IMR-90 (cell line): ENCODE measurements at regions of chr14 and their contacts with region 1.

Region 1: DNA sequence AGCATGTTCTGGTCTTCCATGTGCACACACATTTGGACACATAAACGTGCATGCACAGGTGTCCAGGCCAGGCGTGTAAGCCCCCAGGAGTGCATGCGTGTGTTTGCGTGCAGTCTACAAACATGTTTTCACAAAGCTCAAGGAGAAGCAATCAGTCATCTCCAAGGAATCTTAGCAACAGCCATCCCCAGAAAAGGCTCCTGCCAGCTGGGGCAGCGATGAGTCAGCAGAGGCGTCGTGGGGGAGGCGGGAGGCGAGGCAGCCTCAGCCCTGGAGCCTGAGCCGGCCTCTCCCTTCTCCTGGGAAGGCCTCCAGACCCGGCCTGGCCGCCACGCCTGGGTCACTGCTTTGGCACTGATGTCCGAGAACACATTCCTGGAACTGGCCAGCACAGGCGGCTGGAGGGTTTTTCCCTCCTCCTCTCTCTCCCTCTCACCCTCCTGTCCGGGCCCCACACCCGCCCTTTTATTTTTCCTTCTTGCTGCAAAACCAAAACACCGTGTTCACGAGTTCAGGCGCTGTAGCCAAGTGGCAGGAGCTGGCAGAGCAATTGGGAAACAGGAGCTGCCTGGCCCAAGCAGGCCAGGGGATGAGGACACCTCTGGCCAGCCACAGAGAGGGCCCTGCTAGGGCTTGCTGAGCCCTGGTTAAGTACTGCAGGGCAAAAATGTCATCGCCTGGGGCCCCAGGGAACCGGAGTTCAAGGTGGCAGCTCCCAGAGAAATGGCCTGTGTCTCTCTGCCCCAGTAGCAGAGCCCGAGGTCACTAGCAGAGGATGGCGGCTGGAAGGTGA is 92.7 kb downstream of the LRRC74A start:
- DNase-seq: peak; percentile 99
- ATAC-seq: peak; percentile 82
- H3K4me3 ChIP-seq: no peak overlapping the region
- H3K27ac ChIP-seq: peak overlapping the region; percentile 97
- H3K4me1 ChIP-seq: peaks cover 48% of the 10 kb centered on the region
- H3K27me3 ChIP-seq: no peaks in the 10 kb centered on the region
- CTCF ChIP-seq: 0 out of 2 replicates have a peak, but pooled peaks have one; percentile 13
- POLR2A ChIP-seq: peak; percentile 63
- RAD21 ChIP-seq: peak; percentile 31

Region 2: DNA sequence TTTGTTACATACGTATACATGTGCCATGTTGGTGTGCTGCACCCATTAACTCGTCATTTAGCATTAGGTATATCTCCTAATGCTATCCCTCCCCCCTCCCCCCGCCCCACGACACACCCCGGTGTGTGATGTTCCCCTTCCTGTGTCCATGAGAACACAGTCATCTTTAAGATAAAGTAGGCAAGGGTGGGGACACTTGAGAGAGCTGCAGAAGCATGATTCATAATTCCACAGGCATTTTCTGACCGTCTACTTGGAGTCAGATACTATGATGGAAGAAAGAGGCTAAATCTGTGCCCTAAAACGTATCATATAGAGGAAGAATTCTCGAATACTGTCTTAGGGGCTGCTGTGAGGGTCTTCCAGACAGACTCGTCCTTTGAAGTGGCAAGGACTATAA is 303.6 kb before region 1 on chr14:
- CTCF ChIA-PET with region 1: no interaction called
- POLR2A ChIA-PET with region 1: no interaction called
- dilution Hi-C with region 1: no loop called
- in situ Hi-C with region 1: no loop called
- intact Hi-C with region 1: no loop called
- DNase-seq: no peak
- ATAC-seq: no peak
- H3K4me3 ChIP-seq: no peak overlapping the region
- H3K27ac ChIP-seq: no peak overlapping the region
- H3K4me1 ChIP-seq: no peaks in the 10 kb centered on the region
- H3K27me3 ChIP-seq: peaks cover 2% of the 10 kb centered on the region; the same call in 1 of the 2 replicates
- CTCF ChIP-seq: no peak
- POLR2A ChIP-seq: no peak
- RAD21 ChIP-seq: no peak

Region 3: GRCh38 chr14:76720382-76720813 is 198.5 kb before region 1 on chr14:
- CTCF ChIA-PET with region 1: no interaction called
- POLR2A ChIA-PET with region 1: no interaction called
- dilution Hi-C with region 1: no loop called
- in situ Hi-C with region 1: no loop called
- intact Hi-C with region 1: no loop called
- DNase-seq: peak; percentile 38
- ATAC-seq: peak; percentile 65
- H3K4me3 ChIP-seq: no peak overlapping the region
- H3K27ac ChIP-seq: no peak overlapping the region
- H3K4me1 ChIP-seq: no peaks in the 10 kb centered on the region
- H3K27me3 ChIP-seq: peaks cover 6% of the 10 kb centered on the region
- CTCF ChIP-seq: no peak
- POLR2A ChIP-seq: no peak
- RAD21 ChIP-seq: no peak

Region 4: DNA sequence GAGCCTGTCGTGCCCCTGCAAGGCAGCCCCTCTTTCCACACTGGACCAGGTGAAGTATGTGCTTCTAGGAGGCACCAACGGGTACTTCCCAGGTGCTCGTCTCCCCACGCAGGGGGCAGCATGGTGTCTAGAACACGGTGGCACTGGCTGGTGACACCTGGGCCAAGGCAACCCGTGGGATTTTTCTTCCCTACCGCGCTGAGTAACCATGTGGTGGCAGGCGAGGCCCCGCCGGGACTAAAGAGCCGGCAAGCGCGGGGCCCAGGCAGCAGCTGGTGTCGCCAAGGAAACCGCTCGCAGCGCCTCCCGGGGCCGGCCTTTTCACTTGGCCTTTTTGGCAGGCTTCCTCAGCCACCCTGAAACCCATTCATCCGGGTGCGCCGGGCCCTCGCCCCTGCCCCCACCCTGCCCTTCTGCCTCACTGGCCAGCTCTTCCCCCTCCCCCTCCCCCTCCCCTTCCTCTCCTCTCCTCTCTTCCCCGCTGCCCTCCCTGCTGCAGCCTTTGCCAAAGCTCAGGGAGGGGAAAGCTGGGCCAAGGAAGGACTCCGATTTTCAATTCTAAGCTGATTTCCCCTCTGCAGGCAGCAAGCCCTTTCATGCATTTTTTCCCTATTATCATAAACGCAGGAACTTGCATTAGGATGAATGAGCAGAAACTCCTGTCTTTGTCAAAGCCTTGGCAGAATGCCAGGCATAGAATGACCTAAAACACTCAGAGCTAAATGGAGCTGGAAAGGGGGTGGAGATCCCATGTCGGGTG is 28.3 kb after region 1 on chr14:
- CTCF ChIA-PET with region 1: interaction called, 7 read pairs
- POLR2A ChIA-PET with region 1: no interaction called
- dilution Hi-C with region 1: no loop called
- in situ Hi-C with region 1: no loop called
- intact Hi-C with region 1: loop called (anchors 1 kb)
- DNase-seq: peak; percentile 88
- ATAC-seq: peak; percentile 91
- H3K4me3 ChIP-seq: no peak overlapping the region
- H3K27ac ChIP-seq: peak overlapping the region; percentile 90
- H3K4me1 ChIP-seq: peaks cover 24% of the 10 kb centered on the region
- H3K27me3 ChIP-seq: no peaks in the 10 kb centered on the region
- CTCF ChIP-seq: peak; percentile 61
- POLR2A ChIP-seq: no peak
- RAD21 ChIP-seq: peak; percentile 65

Region 5: DNA sequence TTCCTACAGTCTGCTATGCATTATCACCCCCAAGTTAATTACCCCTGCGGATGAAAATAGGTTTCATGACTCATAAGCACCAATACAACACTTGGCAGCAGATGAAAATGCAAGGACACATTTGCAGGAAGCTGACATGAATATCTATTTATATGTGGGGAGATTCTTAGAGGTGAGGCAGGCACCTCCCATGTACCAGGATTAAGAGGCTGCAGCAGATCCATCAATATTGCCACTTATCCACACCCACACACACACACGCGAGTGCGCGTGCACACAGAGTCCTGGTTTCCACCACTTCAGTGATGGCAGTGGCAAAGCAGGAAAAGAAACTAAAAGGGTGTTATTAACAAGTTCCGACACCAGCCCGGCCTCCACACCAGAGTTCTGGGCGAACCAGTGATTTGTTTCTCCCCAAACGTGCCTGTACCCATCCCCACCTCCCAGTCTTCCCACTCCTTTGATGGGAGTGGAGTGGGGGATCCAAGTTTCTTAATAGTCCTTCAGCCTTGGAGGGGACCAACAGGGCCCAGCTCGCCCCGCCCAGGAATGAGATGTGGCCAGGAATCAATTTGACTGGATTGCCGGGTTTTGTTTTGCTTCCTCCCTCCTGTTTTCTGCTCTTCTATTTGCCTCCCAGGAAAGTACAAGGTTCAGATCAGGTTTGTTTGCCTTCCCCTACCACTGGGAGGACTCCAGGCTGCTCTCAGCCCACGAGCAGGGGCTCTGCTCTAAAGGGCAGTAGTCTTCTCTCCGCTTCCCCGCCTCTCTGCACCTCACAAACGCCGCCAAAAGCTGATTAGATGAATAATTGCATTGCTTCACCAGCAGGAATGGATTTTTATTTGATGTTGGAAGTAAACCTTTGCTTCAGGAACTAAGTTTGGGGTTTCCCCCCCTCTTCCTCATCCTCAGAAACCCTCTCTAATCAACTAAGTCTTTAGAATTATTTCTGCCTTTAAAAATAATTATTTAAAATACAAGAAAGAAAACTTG is 104.4 kb after region 1 on chr14:
- CTCF ChIA-PET with region 1: interaction called, 7 read pairs
- POLR2A ChIA-PET with region 1: interaction called, 8 read pairs
- dilution Hi-C with region 1: no loop called
- in situ Hi-C with region 1: loop called (anchors 5 kb)
- intact Hi-C with region 1: loop called (anchors 1 kb)
- DNase-seq: peak; percentile 38
- ATAC-seq: no peak
- H3K4me3 ChIP-seq: peak overlapping the region; percentile 11; the same call in 1 of the 2 replicates
- H3K27ac ChIP-seq: peak overlapping the region; percentile 52; the same call in 1 of the 2 replicates
- H3K4me1 ChIP-seq: peaks cover 10% of the 10 kb centered on the region
- H3K27me3 ChIP-seq: no peaks in the 10 kb centered on the region
- CTCF ChIP-seq: peak; percentile 33; the same call in 1 of the 2 replicates
- POLR2A ChIP-seq: no peak; the same call in none of the 2 replicates
- RAD21 ChIP-seq: peak; percentile 39

Region 6: DNA sequence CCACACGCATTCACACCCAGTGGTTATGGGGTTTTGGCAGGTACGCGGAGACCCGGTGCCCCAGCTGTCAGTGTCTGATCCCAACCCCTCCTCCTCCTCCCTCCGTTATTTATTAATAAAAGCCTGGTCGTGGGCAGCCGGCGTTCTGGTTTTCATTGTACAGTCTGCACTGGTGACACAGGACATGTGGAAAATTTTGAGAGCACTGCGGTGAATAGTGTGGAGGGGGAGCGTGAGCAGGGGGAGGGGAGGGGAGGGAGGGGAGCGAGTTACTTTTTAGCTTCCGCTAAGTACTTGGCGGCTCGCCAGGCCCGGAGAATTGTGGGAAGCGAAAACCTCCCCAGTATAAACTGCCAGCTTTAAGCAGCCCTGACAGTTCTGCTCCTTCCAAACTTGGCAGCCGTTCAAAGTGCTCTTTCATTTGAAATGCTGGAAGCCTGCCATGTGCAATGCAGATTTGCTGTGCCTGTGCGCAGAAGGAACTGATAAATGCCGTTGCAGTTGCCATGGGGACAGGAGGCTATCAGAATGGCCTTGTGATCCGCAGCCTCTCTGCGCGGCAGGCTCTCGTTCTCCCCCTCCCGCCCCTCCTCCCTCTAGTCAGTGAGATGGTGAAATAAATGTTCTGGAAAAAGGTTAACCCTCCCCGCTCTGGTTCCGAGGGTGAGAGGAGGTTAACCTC is 121.3 kb after region 1 on chr14:
- CTCF ChIA-PET with region 1: interaction called, 12 read pairs
- POLR2A ChIA-PET with region 1: interaction called, 8 read pairs
- dilution Hi-C with region 1: no loop called
- in situ Hi-C with region 1: no loop called
- intact Hi-C with region 1: no loop called
- DNase-seq: peak; percentile 99
- ATAC-seq: peak; percentile 50
- H3K4me3 ChIP-seq: peak overlapping the region; percentile 6; the same call in 1 of the 2 replicates
- H3K27ac ChIP-seq: peak overlapping the region; percentile 84
- H3K4me1 ChIP-seq: peaks cover 42% of the 10 kb centered on the region
- H3K27me3 ChIP-seq: no peaks in the 10 kb centered on the region
- CTCF ChIP-seq: no peak
- POLR2A ChIP-seq: no peak
- RAD21 ChIP-seq: no peak

Region 7: DNA sequence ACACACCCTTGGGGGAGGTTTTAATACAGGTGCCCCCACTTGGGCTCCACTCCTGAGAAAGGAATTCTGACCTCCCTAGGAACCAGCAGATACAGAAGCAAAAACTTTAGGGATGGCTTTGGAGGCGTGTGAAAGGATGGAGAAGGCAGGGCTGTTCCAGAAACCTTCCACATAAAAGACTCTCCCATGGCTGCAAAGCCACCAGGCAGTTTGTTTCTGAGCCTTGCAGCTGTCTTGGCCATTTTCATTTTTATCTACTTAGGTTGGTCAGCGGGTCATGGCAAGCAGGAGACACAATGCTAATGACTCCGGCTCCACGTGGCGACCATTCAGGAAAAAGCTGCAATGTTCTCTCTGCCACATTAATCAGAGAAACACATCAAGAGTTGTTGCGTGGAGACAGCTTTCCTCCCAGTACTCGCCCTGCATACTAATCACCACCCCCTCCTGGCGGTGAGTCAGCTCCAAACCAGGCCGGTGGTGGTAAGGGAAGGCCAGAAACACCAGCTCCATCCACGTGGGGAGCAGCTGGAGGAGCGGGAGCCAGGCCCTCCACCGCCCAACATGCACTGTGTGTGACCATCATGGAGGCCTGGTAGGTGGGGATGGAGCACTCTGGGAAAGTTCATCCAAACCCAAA is 140.4 kb after region 1 on chr14:
- CTCF ChIA-PET with region 1: interaction called, 15 read pairs
- POLR2A ChIA-PET with region 1: no interaction called
- dilution Hi-C with region 1: no loop called
- in situ Hi-C with region 1: loop called (anchors 5 kb)
- intact Hi-C with region 1: no loop called
- DNase-seq: peak; percentile 91
- ATAC-seq: peak; percentile 95
- H3K4me3 ChIP-seq: no peak overlapping the region
- H3K27ac ChIP-seq: no peak overlapping the region
- H3K4me1 ChIP-seq: peaks cover 7% of the 10 kb centered on the region
- H3K27me3 ChIP-seq: no peaks in the 10 kb centered on the region
- CTCF ChIP-seq: peak; percentile 36
- POLR2A ChIP-seq: no peak
- RAD21 ChIP-seq: peak; percentile 46

Region 8: DNA sequence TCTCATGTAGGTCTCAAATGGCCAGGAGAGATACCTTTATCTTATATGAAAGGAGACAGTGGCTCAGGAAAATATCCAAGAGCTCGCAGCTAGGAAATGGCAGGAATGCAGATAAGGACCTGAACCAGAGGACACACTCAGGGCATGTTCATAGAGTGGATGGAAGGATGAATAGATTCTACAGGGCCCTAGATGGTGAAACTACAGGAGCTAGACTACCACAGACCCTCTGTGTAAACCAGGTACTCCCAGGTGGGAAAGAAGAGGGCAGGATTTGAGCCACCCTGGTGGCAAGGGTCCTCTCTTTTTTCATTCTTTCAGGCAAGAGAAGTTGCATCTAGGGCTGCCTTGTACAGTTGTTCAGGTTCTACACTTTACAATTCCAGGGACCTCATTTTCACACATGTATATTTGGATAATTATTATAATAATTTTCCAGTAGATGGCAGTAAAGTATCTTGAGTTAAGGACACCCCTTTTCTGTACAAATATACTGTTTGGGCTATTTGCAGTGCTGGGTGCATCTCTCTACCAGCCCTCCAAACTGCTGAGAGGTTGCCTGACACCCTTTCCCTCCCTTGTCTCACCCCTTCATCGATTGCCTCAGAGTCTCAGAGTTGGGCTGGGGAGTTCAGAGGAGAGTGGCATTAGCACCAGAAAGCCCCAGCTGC is 233.1 kb after region 1 on chr14:
- CTCF ChIA-PET with region 1: no interaction called
- POLR2A ChIA-PET with region 1: no interaction called
- dilution Hi-C with region 1: no loop called
- in situ Hi-C with region 1: no loop called
- intact Hi-C with region 1: no loop called
- DNase-seq: peak; percentile 28
- ATAC-seq: peak; percentile 89
- H3K4me3 ChIP-seq: no peak overlapping the region
- H3K27ac ChIP-seq: no peak overlapping the region
- H3K4me1 ChIP-seq: no peaks in the 10 kb centered on the region
- H3K27me3 ChIP-seq: peaks cover 28% of the 10 kb centered on the region
- CTCF ChIP-seq: peak; percentile 39
- POLR2A ChIP-seq: no peak
- RAD21 ChIP-seq: peak; percentile 47